ENCODE measurements at regions of chr10 and their contacts with region 1.

Region 1: DNA sequence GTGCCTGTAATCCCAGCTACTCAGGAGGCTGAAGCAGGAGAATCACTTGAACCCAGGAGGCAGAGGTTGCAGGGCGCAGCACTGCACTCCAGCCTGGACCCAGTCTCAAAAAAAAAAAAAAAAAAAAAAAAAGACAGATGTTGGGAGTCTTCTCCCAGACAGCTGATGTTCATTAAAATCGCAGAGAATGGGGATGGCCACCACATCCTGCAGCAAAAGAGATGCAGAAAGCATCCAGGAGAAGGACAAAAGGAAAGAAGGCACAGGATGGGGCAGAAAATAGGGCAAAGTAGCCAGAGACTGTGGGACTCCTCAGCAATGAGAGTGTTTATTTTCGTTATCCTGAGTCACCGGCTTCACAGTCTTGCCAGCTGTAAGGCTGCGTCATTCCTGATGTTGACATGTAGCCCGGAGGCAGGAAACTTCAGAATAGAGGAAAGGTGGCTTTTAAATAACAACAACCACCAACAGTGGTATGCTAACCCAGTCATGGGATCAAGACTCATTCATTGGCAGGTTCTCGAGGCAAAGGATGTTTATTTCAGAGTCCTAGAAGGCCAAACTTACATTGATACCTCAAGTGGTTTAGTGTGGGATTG is 149.5 kb upstream of the SVIL start:
- DNase-seq: peak; percentile 63 to 93
- H3K4me3 ChIP-seq: no peak overlapping the region
- H3K27ac ChIP-seq: peak overlapping the region; percentile 85 to 87
- H3K4me1 ChIP-seq: peaks cover 3 to 25% of the 10 kb centered on the region in 2 donors
- H3K27me3 ChIP-seq: no peaks in the 10 kb centered on the region
- CTCF ChIP-seq: no peak

Region 2: DNA sequence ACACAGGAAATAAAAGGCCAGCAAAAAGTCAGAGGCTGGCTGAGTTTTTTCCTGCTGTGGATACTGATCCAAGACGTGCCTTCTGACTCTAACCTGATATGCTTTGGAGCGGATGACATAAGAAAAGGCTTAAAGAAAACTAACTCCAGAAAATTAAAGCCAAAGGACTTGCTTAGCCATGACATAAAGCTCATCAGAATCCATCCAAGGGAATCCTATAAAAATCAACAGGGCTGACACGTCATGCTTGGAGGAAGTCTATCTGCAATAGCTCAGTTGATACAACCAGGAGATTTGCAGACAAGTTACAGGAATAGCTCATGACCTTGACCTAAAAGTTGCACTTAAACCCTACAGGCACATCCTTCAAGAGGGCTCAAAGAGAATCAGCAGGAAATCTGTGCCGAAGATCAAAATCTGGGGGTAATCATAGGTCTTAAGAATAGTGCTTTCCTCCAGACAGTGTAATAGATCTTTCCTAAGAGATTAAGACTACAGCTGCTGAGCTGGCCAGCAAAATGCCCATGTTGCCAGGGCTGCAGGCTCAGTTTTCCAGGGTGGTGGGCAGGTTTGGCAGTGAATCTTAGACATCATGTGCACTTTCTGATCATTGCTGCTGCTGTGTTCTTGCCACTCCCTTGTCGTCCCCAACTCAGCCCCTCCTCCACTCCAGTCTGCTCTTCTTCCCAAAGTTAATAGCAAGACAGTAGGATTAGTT is 38.0 kb before region 1 on chr10:
- intact Hi-C with region 1: loop called (anchors 2 kb)
- DNase-seq: no peak
- H3K4me3 ChIP-seq: no peak overlapping the region
- H3K27ac ChIP-seq: peak overlapping the region; percentile 54 to 67
- H3K4me1 ChIP-seq: peaks cover 5 to 21% of the 10 kb centered on the region in 2 donors
- H3K27me3 ChIP-seq: no peaks in the 10 kb centered on the region
- CTCF ChIP-seq: no peak

Measured in ascending aorta (tissue), 2 donors.